AG04449 (cell line): ENCODE measurements at regions of chr4 and their contacts with region 1.

Region 1: DNA sequence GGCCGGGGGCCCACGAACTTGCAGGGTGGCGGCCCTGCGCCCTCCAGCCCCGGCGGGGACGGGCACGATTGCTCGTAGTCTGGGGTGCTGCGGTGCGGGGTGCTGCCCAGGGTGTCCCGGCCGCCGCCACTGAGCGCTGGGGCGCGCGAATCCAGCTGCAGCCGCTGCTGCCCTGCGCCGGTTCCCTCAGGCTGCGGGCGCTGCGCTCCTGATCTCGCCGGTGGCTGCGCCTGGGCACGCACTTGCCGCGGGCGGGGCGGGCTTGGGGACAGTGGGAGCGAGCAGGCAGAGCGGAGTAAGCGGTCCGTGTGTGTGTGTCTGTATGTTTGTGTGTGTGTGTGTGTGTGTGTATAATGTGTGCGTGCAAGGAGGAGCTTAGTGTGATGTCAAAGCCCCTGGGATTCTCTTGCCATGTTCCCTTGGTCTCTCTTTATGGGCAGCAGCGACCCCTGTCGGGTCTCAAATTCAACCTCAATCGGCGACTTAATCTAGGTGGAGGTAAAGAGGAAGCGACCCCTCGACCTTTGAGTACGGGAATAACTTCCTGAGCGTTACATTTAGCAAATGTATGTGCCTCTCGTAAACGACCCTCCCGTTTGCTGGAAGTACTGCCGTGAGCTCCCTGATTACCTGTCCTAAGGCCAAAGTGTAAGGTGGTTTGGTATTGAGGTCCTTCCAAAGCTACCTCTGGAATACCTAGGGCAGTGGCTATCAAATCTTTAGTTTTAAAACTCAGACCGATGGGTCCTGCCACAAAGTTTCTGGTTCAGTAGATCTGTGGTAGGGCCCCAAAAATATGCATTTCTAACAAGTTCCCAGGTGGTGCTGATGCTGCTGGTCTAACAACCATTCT is at the start of gene RNF150:
- DNase-seq: peak; percentile 81
- H3K4me3 ChIP-seq: peak within 1 kb of the TSS; percentile 93
- CTCF ChIP-seq: peak; percentile 69

Region 2: DNA sequence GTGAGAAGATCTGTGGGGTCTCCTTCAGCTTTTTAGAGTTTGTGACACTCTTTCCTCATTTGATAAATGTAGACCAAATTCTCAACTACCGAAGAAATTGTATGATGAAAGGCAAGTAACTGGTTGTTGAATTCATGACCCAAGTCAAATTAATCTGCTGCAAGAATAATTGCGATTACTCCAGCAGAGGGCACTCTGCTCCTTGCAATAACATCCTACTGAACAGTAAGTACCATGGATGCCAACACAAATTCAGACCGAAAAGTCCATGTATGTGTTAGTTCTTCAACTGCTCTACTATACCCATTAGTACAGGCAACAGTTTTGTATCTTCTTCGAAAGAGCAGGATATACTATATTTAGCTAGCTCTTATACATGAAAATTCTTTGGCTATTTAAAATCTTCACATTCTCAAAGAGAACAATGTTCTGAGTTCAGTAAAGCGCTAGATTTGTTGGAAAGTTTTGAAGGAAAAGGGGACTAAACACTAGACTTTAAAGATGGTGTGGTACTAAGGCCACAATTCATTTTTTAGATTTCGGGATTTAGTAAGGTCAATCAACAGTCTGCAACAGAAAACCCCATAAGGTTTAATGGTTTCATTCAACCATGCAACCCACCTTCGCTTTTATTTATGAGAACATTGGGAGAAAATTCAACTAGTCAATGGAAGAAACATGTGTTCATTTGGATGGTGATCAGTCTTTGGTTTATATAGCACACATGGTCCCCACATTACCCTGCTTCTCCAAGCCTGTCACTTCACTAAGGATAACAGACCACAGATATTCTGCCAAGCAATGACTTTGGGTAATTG is 271.8 kb before region 1 on chr4:
- CTCF ChIA-PET with region 1: interaction called, 276 read pairs
- POLR2A ChIA-PET with region 1: interaction called, 3 read pairs
- DNase-seq: peak; percentile 67
- H3K4me3 ChIP-seq: no peak overlapping the region
- CTCF ChIP-seq: peak; percentile 48

Region 3: DNA sequence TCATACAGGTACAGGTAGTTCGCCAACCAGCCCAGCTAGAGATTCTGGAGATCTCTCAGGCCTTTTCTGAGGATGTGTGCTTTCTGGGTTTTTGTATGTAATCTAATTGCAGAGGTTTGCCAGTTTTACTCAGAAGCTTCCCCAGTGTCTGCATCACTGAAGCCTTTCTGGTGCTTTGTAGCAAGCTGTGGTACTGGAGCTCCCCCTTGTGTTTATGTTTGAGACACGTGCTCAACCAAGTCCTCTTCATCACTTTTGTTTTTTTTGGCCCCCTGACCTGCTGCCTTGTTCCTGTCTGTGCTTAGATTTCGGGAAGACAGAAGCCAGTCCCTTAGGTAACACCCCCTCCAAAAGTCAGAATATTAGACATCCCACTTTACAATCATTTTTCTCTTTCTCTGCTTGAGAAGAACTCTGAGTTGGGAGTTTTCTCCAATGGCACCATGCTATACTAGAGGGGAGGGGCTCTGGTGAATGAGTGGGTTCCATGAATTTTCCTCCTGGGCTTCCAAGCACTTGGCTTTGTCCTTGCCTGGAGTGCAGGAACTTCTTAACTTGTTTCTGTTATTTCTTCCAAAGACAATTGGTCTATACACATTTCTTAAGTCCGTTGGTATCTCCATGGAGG is 248.8 kb before region 1 on chr4:
- CTCF ChIA-PET with region 1: interaction called, 54 read pairs
- POLR2A ChIA-PET with region 1: interaction called, 3 read pairs
- DNase-seq: no peak
- H3K4me3 ChIP-seq: no peak overlapping the region
- CTCF ChIP-seq: peak; percentile 68

Region 4: GRCh38 chr4:140937866-140938265 is 195.5 kb before region 1 on chr4:
- CTCF ChIA-PET with region 1: interaction called, 10 read pairs
- POLR2A ChIA-PET with region 1: interaction called, 4 read pairs
- DNase-seq: peak; percentile 54
- H3K4me3 ChIP-seq: no peak overlapping the region
- CTCF ChIP-seq: no peak

Region 5: GRCh38 chr4:141121768-141122454 is 11.5 kb before region 1 on chr4:
- CTCF ChIA-PET with region 1: interaction called, 16 read pairs
- POLR2A ChIA-PET with region 1: no interaction called
- DNase-seq: no peak
- H3K4me3 ChIP-seq: no peak overlapping the region
- CTCF ChIP-seq: no peak